ENCODE measurements at regions of chr1 and their contacts with region 1.

Region 1: GRCh38 chr1:8848663-8849386 is 29.7 kb downstream of the ENO1 start:
- DNase-seq: no peak
- H3K4me3 ChIP-seq: peak overlapping the region in 1 of 4 donors; percentile 23
- H3K27ac ChIP-seq: peak overlapping the region in 2 of 4 donors; percentile 45 to 50
- H3K4me1 ChIP-seq: peaks cover 6 to 24% (median 8%) of the 10 kb centered on the region in 3 donors
- H3K27me3 ChIP-seq: no peaks in the 10 kb centered on the region
- CTCF ChIP-seq: peak; percentile 86 to 96 (median 90)
- POLR2A ChIP-seq: no peak

Region 2: DNA sequence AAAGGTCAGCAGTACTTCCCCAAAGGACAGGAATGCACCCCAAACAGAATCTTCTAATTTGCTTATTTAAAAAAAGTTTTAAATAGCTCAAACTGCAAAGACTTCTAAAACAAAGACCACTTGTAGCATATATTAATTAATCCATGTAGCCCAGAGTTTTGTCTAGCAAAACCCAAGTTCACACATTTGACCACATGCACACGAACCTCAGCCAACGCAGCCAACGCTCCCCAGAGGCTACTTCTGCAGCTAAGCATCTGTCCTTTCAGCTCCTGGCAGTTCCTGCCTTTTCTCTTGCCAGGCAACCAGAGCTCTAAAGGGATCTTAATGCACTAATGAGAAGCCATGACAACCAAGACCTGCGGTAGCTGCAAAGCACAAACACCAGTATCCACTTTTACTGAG is 121.0 kb before region 1 on chr1:
- intact Hi-C with region 1: loop called (anchors 10 kb)
- DNase-seq: no peak
- H3K4me3 ChIP-seq: no peak overlapping the region
- H3K27ac ChIP-seq: no peak overlapping the region
- H3K4me1 ChIP-seq: peaks cover 0 to 21% (median 5%) of the 10 kb centered on the region in 3 donors
- H3K27me3 ChIP-seq: no peaks in the 10 kb centered on the region
- CTCF ChIP-seq: no peak
- POLR2A ChIP-seq: no peak